CD8-positive, alpha-beta T cell (primary cell): ENCODE measurements at regions of chr9 and their contacts with region 1.

Region 1: DNA sequence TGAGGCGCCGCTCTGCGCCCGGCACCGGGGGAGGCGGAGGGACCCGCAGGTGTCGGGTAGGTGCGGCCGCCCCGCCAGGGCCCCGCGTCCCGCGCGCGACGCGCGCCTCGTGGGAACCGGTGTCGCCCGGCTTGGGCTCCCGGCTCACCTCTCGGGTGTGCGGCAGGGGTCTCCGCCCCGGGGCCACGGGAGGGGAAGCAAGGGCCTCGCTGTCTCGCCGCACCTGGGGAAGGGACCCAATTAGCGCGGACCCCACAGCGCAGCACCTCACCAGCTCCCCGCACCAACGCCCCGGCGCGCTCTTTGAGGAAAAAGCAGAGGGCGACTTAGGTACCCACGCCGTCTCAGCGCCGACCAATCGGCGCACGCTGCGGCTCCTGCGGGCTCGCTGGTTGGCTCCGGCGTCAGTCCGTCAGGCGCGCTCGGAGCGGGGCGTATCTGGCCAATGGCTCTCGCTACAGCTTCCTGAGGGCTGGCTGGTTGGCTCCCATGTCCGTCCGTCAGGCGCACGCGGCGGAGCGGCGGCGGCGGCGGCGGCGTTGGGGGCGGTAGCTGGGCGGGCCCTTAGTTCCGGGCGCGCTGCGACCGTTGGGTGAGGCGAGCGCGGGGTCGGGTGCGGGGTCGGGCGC is at the start of gene TRAF2:
- DNase-seq: peak; percentile 94 to 100 (median 97)
- ATAC-seq: peak; percentile 88
- H3K4me3 ChIP-seq: peak within 1 kb of the TSS; percentile 83 to 85
- H3K4me3 Mint-ChIP-seq: peak within 1 kb of the TSS; percentile 83
- H3K27ac ChIP-seq: peak within 1 kb of the TSS; percentile 53 to 92
- H3K27ac Mint-ChIP-seq: peak within 1 kb of the TSS; percentile 95
- H3K4me1 ChIP-seq: peaks cover 43% of the 10 kb centered on the region
- H3K4me1 Mint-ChIP-seq: peaks cover 36% of the 10 kb centered on the region
- H3K27me3 ChIP-seq: no peaks in the 10 kb centered on the region
- H3K27me3 Mint-ChIP-seq: no peaks in the 10 kb centered on the region
- CTCF ChIP-seq: no peak
- total RNA-seq, gene TRAF2: 7.1 to 11.8 TPM

Region 2: DNA sequence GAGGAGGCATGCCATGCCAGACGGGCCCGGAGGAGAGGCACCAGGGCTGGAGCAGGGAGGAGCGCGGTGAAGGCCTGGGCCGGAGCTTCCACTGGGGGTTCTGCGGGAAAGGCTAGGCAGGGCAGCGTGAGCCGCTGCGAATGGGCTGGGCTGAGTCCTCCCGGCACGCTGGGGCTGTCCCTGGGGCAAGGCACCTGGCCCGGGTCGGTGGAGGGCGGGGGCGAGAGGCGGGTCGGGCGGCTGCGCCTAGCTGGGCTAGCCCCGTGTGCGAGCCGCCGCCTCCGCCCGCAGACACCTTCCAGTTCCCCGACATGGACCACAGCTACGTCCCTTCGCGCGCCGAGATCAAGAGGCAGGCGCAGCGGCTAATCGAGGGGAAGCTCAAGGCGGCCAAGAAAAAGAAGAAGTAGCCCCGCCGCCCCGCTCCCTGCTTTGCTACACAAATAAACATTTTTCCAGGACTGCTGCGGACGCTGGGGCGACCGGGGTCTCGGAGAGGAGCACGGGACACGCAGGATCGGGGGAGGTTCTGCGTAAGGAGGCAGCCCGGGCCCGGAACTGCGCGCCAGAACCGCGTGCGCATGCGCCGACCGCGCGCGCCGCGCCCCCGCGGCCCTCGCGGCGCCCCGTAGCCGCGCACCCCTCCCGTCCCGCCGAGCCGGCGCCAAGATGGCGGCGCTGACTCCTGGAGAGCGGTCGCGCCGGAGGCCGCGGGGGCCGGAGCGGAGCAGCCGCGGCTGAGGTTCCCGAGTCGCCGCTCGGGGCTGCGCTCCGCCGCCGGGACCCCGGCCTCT is 78.6 kb before region 1 on chr9 and contains the start of gene RABL6:
- CTCF ChIA-PET with region 1: no interaction called
- POLR2A ChIA-PET with region 1: interaction called, 13 read pairs
- intact Hi-C with region 1: loop called in 1 of 2 experiments (anchors 2 kb)
- DNase-seq: peak; percentile 64 to 92 (median 81)
- ATAC-seq: peak; percentile 85
- H3K4me3 ChIP-seq: peak within 1 kb of the TSS; percentile 78 to 92
- H3K4me3 Mint-ChIP-seq: peak within 1 kb of the TSS; percentile 88
- H3K27ac ChIP-seq: peak within 1 kb of the TSS; percentile 66 to 79
- H3K27ac Mint-ChIP-seq: peak within 1 kb of the TSS; percentile 89
- H3K4me1 ChIP-seq: peaks cover 26% of the 10 kb centered on the region
- H3K4me1 Mint-ChIP-seq: peaks cover 34% of the 10 kb centered on the region
- H3K27me3 ChIP-seq: no peaks in the 10 kb centered on the region
- H3K27me3 Mint-ChIP-seq: no peaks in the 10 kb centered on the region
- CTCF ChIP-seq: no peak
- total RNA-seq, gene RABL6: 53.3 to 55.5 TPM

Region 3: GRCh38 chr9:136865735-136866103 is 20.3 kb before region 1 on chr9:
- CTCF ChIA-PET with region 1: interaction called, 4 read pairs
- POLR2A ChIA-PET with region 1: interaction called, 9 read pairs
- intact Hi-C with region 1: loop called (anchors 1 kb)
- DNase-seq: peak in 1 of 9 experiments; percentile 29
- ATAC-seq: peak; percentile 16
- H3K4me3 ChIP-seq: peak overlapping the region; percentile 64 to 78
- H3K4me3 Mint-ChIP-seq: peak overlapping the region; percentile 87
- H3K27ac ChIP-seq: peak overlapping the region; percentile 59 to 80
- H3K27ac Mint-ChIP-seq: peak overlapping the region; percentile 66
- H3K4me1 ChIP-seq: peaks cover 16% of the 10 kb centered on the region
- H3K4me1 Mint-ChIP-seq: peaks cover 23% of the 10 kb centered on the region
- H3K27me3 ChIP-seq: no peaks in the 10 kb centered on the region
- H3K27me3 Mint-ChIP-seq: no peaks in the 10 kb centered on the region
- CTCF ChIP-seq: no peak

Region 4: GRCh38 chr9:136944519-136945279 is 58.6 kb after region 1 on chr9 and contains the starts of genes C8G and FBXW5:
- CTCF ChIA-PET with region 1: interaction called, 3 read pairs
- POLR2A ChIA-PET with region 1: interaction called, 5 read pairs
- intact Hi-C with region 1: loop called (anchors 1 kb)
- DNase-seq: peak; percentile 87 to 98 (median 93)
- ATAC-seq: peak; percentile 87
- H3K4me3 ChIP-seq: peak within 1 kb of the TSS; percentile 63 to 79
- H3K4me3 Mint-ChIP-seq: peak within 1 kb of the TSS; percentile 82
- H3K27ac ChIP-seq: peak within 1 kb of the TSS; percentile 28 to 48
- H3K27ac Mint-ChIP-seq: peak within 1 kb of the TSS; percentile 62
- H3K4me1 ChIP-seq: peaks cover 16% of the 10 kb centered on the region
- H3K4me1 Mint-ChIP-seq: peaks cover 12% of the 10 kb centered on the region
- H3K27me3 ChIP-seq: no peaks in the 10 kb centered on the region
- H3K27me3 Mint-ChIP-seq: no peaks in the 10 kb centered on the region
- CTCF ChIP-seq: peak; percentile 96
- total RNA-seq, gene C8G: not detected
- total RNA-seq, gene FBXW5: 38.4 to 39.5 TPM

Region 5: DNA sequence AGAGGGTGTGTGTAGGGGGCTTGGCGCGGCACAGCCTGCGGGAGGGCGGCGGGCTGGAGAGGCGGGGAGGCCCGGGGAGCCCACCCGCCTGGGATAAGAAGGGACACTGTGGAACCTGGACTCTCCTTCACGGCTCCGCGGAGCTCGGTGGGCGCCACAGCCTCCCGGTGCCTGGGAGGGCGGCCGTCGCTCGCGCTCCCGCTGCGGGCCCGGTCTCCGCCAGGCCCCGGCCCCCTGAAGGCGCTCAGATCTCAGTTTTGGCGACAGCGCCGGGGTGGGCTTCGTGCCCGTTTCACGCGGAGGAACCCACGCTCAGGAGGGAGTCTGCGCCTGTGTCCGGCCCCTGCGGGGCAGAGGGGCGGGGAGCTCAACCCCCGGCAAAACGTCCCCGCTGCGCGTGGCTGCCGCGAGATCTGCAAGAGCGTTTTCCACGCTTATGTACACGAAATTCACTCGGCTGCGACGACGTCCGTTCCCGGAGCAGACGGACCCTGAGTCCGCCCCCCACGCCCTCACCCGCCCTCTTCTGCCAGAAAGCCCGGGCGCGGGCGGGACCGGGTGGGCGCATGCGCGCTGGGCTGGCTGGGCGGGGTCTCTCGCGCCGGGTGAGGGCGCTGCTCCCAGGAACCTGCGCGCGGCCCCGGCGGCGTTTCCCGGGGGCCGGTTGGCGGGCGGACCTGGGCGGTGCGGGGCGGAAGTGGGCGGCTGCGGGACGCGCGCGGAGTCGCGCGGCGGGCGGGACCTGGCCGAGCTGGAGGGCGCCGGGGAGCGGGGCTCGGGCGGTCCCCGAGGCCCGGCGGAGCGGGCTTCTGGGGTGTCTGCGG is 368.8 kb after region 1 on chr9 and contains the start of gene NELFB:
- CTCF ChIA-PET with region 1: no interaction called
- POLR2A ChIA-PET with region 1: interaction called, 3 read pairs
- intact Hi-C with region 1: loop called in 1 of 2 experiments (anchors 5 kb)
- DNase-seq: peak; percentile 91 to 99 (median 95)
- ATAC-seq: peak; percentile 92
- H3K4me3 ChIP-seq: peak within 1 kb of the TSS; percentile 81 to 83
- H3K4me3 Mint-ChIP-seq: peak within 1 kb of the TSS; percentile 88
- H3K27ac ChIP-seq: peak within 1 kb of the TSS; percentile 12 to 38
- H3K27ac Mint-ChIP-seq: peak within 1 kb of the TSS; percentile 73
- H3K4me1 ChIP-seq: peaks cover 18% of the 10 kb centered on the region
- H3K4me1 Mint-ChIP-seq: peaks cover 15% of the 10 kb centered on the region
- H3K27me3 ChIP-seq: no peaks in the 10 kb centered on the region
- H3K27me3 Mint-ChIP-seq: no peaks in the 10 kb centered on the region
- CTCF ChIP-seq: no peak
- total RNA-seq, gene NELFB: 17.1 to 17.6 TPM